ENCODE measurements at regions of chr22 and their contacts with region 1.

Region 1: GRCh38 chr22:23696326-23696851 is 5.6 kb downstream of the RGL4 start:
- DNase-seq: peak; percentile 78
- H3K4me3 Mint-ChIP-seq: peak overlapping the region; percentile 89
- H3K27ac Mint-ChIP-seq: peak overlapping the region; percentile 99
- H3K4me1 Mint-ChIP-seq: peaks cover 36% of the 10 kb centered on the region
- H3K27me3 Mint-ChIP-seq: no peaks in the 10 kb centered on the region

Region 2: DNA sequence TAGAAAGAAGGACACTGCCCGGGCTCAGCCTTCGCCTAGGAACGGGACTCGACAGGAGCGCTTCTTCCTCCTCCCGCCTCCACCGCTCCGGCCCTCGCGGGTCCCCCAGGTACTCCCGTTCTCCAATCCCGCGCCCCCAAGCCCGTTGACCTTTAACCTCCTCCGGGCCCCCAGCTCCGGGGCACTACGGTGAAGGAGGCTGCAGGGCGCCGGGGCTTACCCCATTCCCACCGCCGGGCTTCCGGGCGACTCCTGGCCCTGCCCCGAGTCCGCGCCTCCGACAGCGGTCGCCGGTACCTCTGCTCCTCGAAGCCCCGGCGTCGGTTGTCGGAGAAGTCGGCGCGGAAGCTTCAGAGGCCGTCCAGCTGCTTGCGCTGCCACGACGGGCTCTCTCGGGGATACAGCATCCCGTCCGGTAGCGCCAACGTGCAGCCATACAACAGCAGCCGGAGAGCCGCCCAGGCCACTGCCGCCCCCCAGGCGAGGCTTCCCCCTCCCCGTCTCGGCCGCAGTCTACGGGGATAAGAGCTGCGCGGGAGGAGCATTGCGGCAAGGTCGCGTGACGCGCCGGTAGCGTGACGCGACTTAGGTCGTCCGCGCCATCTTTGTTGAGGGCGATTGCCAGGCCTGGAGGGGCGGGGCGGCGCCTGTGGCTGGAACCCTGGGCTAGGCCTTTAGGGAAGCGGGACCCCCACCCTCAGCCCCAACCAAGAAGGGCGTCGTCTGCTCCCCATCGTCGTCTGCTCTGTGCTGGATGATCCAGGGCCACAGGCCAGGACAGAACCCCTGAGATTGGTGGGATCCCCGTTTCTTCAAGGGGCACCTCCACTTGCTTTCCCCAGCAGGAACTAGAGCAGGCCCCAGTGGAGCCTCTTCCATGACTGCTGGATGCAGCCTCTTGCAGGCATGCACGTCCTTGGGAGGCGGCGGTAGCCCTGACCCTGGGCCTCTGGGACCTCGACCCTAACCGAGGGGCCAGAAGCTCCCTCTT is 20.7 kb after region 1 on chr22:
- intact Hi-C with region 1: loop called (anchors 2 kb)
- DNase-seq: peak; percentile 77
- H3K4me3 Mint-ChIP-seq: peak overlapping the region; percentile 75
- H3K27ac Mint-ChIP-seq: peak overlapping the region; percentile 78
- H3K4me1 Mint-ChIP-seq: peaks cover 12% of the 10 kb centered on the region
- H3K27me3 Mint-ChIP-seq: no peaks in the 10 kb centered on the region

Measured in activated T-helper 2 cell treated with anti-CD3 and anti-CD28 coated beads, Interferon-gamma antibody, Interleukin-2, Interleukin-4, amounts not matched to agents 10 μg/mL and 5 μg/mL and 100 μg/mL, durations not matched to agents 14 hours and 24 hours and 36 hours (primary cell).